BJ (cell line): ENCODE measurements at regions of chr1 and their contacts with region 1.

Region 1: DNA sequence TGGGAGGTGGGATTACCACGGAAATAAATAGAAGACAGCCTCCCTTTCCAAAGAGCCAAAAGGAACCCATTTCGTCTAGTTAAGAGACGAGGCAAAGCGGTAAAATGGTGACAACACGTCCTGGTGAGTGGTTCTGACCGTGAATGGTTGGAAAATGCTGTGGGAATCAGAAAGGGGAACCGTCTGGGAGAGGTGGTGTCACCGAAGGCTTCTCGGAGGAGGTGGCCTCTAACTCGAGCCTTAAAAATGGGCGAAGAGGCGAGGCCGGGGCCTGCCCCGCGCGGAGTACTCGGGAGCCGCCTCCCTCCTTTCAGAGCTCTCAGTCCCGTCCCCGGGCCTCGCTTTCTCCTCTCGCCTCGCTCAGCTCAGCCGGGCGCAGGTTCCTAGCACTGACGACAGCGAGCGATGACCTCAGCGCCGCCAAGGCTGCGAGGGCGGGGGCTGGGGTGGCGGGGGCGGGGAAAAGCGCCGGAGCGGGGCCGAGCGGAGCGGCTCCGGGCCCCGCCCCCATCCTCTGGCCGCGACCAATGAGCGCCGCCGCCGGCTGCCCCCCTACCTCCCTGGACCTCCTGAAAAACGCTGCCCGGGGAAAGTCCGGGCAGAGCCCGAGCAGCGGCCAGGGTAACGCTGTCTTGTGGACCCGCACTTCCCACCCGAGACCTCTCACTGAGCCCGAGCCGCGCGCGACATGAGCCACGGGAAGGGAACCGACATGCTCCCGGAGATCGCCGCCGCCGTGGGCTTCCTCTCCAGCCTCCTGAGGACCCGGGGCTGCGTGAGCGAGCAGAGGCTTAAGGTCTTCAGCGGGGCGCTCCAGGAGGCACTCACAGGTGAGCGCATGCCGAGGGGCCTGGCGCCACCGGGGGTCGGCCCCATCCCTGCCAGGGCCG is at the start of gene BTG2:
- DNase-seq: peak; percentile 31
- H3K4me3 ChIP-seq: peak within 1 kb of the TSS; percentile 93
- H3K27me3 ChIP-seq: no peaks in the 10 kb centered on the region; the same call in 1 of the 2 replicates
- CTCF ChIP-seq: no peak
- polyA plus RNA-seq, gene BTG2: 22.8 and 23.7 TPM in 2 replicates

Region 2: GRCh38 chr1:203326830-203327683 is 21.9 kb after region 1 on chr1:
- CTCF ChIA-PET with region 1: interaction called, 16 read pairs
- POLR2A ChIA-PET with region 1: no interaction called
- DNase-seq: no peak
- H3K4me3 ChIP-seq: peak overlapping the region; percentile 49
- H3K27me3 ChIP-seq: peaks cover 32% of the 10 kb centered on the region
- CTCF ChIP-seq: no peak